ENCODE measurements at regions of chr1 and their contacts with region 1.

Region 1: GRCh38 chr1:29793101-29793546 is 556.8 kb downstream of the PTPRU start:
- H3K4me3 ChIP-seq: no peak overlapping the region
- H3K27ac ChIP-seq: no peak overlapping the region
- H3K4me1 ChIP-seq: no peaks in the 10 kb centered on the region
- CTCF ChIP-seq: peak; percentile 67

Region 2: DNA sequence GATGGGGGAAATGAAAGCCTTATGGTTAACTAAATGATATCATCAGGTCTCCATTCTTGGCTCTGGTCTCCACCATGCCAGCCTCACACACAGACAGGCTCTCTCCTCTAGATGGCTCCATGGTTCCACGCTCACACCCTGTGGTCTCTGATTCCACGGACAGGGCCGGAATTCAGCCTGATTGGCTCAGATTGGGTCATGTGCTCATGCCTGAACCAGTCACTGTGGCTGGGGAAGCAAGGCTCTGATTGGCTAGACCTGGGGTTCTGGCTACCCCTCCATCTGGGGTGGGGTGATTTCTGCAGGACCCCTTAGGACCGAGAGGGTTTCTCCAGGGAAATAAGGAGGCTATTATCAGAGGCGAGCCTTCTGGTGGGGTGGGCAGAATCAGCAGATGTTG is 279.8 kb before region 1 on chr1:
- CTCF ChIA-PET with region 1: no interaction called
- POLR2A ChIA-PET with region 1: no interaction called
- H3K4me3 ChIP-seq: no peak overlapping the region
- H3K27ac ChIP-seq: no peak overlapping the region
- H3K4me1 ChIP-seq: no peaks in the 10 kb centered on the region
- CTCF ChIP-seq: no peak

Region 3: GRCh38 chr1:29621826-29622435 is 171.2 kb before region 1 on chr1:
- CTCF ChIA-PET with region 1: no interaction called
- POLR2A ChIA-PET with region 1: no interaction called
- H3K4me3 ChIP-seq: no peak overlapping the region
- H3K27ac ChIP-seq: no peak overlapping the region
- H3K4me1 ChIP-seq: no peaks in the 10 kb centered on the region
- CTCF ChIP-seq: no peak

Region 4: GRCh38 chr1:29836651-29837646 is 43.8 kb after region 1 on chr1:
- CTCF ChIA-PET with region 1: interaction called, 10 read pairs
- POLR2A ChIA-PET with region 1: no interaction called
- H3K4me3 ChIP-seq: no peak overlapping the region
- H3K27ac ChIP-seq: no peak overlapping the region
- H3K4me1 ChIP-seq: no peaks in the 10 kb centered on the region
- CTCF ChIP-seq: no peak

Region 5: GRCh38 chr1:30085811-30086770 is 293.0 kb after region 1 on chr1:
- CTCF ChIA-PET with region 1: interaction called, 17 read pairs
- POLR2A ChIA-PET with region 1: interaction called, 3 read pairs
- H3K4me3 ChIP-seq: no peak overlapping the region
- H3K27ac ChIP-seq: no peak overlapping the region
- H3K4me1 ChIP-seq: peaks cover 10% of the 10 kb centered on the region; the same call in 1 of the 2 replicates
- CTCF ChIP-seq: peak; percentile 85

Region 6: DNA sequence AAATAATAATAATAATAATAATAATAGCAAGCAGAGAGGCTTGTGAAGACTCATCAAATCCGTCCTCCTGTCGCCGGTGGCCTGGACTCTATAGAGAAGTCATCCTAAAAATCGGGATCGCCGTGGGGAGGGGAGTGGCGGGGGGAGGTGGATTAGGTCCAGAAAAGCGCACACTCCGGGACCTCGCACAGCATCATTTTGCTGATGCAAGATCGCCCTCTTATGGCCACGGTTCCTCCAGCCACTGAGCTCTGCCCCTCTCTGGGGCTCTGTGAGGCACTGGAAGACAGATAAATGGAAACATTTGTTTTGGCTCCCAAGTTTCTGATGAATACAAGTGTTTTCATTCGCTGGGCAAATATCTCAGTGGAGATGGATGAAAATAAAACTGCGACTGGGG is 318.3 kb after region 1 on chr1:
- CTCF ChIA-PET with region 1: interaction called, 13 read pairs
- POLR2A ChIA-PET with region 1: no interaction called
- H3K4me3 ChIP-seq: no peak overlapping the region
- H3K27ac ChIP-seq: no peak overlapping the region
- H3K4me1 ChIP-seq: no peaks in the 10 kb centered on the region
- CTCF ChIP-seq: peak; percentile 33; the same call in 1 of the 2 replicates